ENCODE measurements at regions of chr4 and their contacts with region 1.

Region 1: DNA sequence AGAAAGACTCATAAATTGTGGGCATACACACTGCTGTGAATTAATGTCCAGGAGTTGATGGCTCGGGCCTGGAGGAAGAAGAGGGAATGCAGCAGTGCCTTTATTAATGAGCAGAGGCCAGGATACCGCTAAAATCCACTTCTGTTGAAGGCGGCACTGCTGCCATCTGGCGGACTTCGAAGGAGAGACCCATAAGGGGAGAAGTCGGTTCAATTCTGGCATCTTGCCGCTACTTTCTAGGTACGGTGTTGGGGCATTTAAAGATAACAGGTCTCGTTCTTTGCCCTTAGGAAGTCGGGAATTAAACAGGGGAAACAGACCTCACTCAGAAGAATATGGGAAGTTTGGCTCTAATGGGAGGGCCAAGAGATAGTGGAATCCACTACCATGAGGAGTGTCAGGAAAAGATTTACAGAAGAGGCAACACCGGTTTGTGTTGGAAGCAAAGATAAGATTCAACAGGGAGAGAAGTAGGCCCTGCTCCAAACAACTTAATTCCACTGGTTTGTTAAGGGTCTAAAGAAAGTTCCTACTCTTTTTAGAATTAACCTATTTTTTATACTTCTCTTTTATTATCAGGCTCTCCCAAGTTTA is 133.6 kb upstream of the GIMD1 start:
- DNase-seq: peak; percentile 46
- CTCF ChIP-seq: peak; percentile 64

Region 2: DNA sequence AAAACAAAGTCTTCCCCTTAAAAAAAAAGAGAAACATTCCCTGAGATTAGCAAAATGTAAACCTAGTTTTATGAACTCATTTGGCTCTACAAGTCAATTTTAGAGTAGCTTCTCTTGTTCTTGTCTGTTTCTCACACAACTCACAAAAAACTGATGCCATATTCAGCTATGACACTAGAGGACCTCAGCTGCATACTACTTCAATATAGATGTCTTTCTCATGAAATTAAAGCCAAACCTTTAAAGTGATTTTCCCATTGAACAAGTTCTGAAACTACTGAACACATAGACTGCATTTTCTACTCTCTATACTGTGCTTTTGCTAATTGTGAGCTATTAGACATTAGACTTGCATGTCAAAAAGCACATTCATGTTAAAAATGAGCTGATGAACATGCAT is 236.0 kb before region 1 on chr4:
- CTCF ChIA-PET with region 1: interaction called, 21 read pairs
- POLR2A ChIA-PET with region 1: no interaction called
- DNase-seq: no peak
- CTCF ChIP-seq: peak; percentile 62

Region 3: GRCh38 chr4:106358899-106359298 is 143.3 kb before region 1 on chr4:
- CTCF ChIA-PET with region 1: no interaction called
- POLR2A ChIA-PET with region 1: no interaction called
- DNase-seq: no peak
- CTCF ChIP-seq: no peak

Region 4: GRCh38 chr4:106473515-106473914 is 28.7 kb before region 1 on chr4:
- CTCF ChIA-PET with region 1: no interaction called
- POLR2A ChIA-PET with region 1: no interaction called
- DNase-seq: no peak
- CTCF ChIP-seq: no peak

Region 5: GRCh38 chr4:106541253-106541652 is 39.0 kb after region 1 on chr4:
- CTCF ChIA-PET with region 1: no interaction called
- POLR2A ChIA-PET with region 1: no interaction called
- DNase-seq: no peak
- CTCF ChIP-seq: no peak

Measured in GM10248 (cell line).